Activated CD4-positive, alpha-beta memory T cell treated with anti-CD3 and anti-CD28 coated beads, Interleukin-2, amount 10 ng/mL, durations not matched to agents 7 days and 5 days (primary cell): ENCODE measurements at regions of chr22 and their contacts with region 1.

Region 1: DNA sequence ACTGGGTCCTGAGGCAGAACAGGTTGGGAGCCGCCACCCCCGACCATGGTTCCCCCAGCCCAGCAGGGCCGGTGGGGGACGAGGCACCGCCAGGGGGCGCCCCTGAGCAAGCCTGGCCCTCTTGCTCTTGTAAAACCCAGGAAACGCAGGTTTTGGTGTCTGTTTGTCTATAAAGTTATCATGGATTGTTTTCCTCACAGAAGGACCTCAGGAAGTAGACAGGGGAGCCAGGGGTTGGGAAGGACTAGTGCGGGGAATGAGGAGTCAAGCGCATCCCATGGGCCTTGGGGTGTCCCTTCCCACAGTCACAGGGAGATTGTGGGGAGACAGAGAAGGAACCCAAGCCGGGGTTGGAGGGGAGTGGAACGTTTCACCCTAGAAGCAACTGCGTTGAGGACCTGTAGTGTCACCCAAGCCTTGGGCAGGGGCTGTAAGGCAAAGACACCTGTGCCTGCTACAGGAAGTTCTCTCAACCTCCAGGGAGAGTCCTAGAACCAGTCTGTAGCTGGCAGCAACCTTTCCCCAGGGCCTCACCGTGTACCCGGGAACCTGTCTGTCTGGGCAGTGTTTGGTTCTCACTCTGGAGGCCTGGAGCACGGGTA is 26.4 kb downstream of the KCTD17 start:
- DNase-seq: peak; percentile 88
- H3K4me3 Mint-ChIP-seq: peak overlapping the region; percentile 1
- H3K27ac Mint-ChIP-seq: peak overlapping the region; percentile 100
- H3K4me1 Mint-ChIP-seq: peaks cover 69% of the 10 kb centered on the region
- H3K27me3 Mint-ChIP-seq: no peaks in the 10 kb centered on the region

Region 2: GRCh38 chr22:37030560-37031281 is 47.3 kb before region 1 on chr22:
- CTCF ChIA-PET with region 1: no interaction called
- POLR2A ChIA-PET with region 1: no interaction called
- DNase-seq: no peak
- H3K4me3 Mint-ChIP-seq: no peak overlapping the region
- H3K27ac Mint-ChIP-seq: no peak overlapping the region
- H3K4me1 Mint-ChIP-seq: no peaks in the 10 kb centered on the region
- H3K27me3 Mint-ChIP-seq: peaks cover 14% of the 10 kb centered on the region

Region 3: DNA sequence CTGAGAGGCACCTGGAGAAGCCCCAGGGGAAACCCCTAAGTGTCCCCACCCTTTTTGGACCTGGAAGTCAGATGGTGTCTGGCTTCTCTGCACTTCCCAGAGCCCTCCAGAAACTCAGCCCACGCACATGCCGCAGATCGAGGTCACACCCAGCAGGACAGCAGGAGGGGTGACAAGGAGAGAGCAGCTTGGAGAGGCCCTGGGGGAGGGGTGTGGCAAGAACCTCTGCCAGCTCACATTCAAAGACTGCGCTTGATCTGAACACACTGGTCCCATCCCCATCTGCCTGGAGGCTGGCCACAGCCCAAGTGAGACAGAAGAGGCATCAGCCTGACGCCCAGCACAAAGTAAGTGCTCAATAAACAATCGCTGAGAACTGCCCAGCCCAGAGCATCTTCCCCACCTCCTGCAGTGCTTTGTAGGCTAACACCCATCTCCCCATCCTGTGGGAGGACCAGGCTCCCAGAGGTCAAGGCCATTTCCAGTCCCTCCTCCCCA is 10.2 kb after region 1 on chr22:
- CTCF ChIA-PET with region 1: interaction called, 3 read pairs
- POLR2A ChIA-PET with region 1: interaction called, 11 read pairs
- DNase-seq: peak; percentile 38
- H3K4me3 Mint-ChIP-seq: peak overlapping the region; percentile 54
- H3K27ac Mint-ChIP-seq: peak overlapping the region; percentile 40
- H3K4me1 Mint-ChIP-seq: peaks cover 50% of the 10 kb centered on the region
- H3K27me3 Mint-ChIP-seq: no peaks in the 10 kb centered on the region

Region 4: GRCh38 chr22:37121887-37122591 is 44.1 kb after region 1 on chr22:
- CTCF ChIA-PET with region 1: interaction called, 81 read pairs
- POLR2A ChIA-PET with region 1: interaction called, 194 read pairs
- DNase-seq: peak; percentile 96
- H3K4me3 Mint-ChIP-seq: peak overlapping the region; percentile 74
- H3K27ac Mint-ChIP-seq: peak overlapping the region; percentile 99
- H3K4me1 Mint-ChIP-seq: peaks cover 88% of the 10 kb centered on the region
- H3K27me3 Mint-ChIP-seq: no peaks in the 10 kb centered on the region

Region 5: DNA sequence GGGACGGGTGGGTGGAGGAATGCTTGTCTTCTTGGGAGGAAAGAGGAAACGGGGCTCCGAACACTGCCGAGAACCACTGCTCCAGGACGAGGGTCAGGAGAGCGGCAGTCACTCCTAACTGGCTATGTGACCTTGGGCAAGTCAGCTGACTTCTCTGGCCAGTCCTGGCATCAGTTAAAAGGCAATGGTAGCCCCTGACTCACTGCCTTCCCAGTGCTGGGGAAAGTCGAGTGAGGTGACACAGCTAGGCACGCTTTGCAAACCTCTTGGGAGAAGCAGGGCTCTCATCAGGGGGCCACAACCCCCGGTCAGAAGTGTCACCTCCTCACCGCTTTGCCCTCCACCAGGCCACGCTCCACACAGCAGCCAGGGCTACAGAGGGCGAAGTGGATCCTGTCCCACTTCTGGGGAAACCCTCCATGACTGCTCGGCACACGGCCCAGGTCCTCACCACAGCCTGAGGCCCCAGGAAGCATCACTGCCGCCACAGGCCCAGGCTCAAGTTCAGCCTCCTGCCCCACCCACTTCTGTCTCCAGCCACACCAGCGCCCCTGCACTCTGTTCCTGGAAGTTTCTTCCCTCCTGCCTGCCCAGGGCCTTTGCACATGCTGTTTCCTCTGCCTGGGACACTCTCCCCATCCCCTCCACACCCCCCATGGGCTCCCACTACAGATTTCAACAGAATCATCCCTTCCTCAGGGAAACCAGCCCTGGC is 55.5 kb after region 1 on chr22:
- CTCF ChIA-PET with region 1: interaction called, 9 read pairs
- POLR2A ChIA-PET with region 1: interaction called, 194 read pairs
- DNase-seq: no peak
- H3K4me3 Mint-ChIP-seq: no peak overlapping the region
- H3K27ac Mint-ChIP-seq: peak overlapping the region; percentile 49
- H3K4me1 Mint-ChIP-seq: peaks cover 47% of the 10 kb centered on the region
- H3K27me3 Mint-ChIP-seq: no peaks in the 10 kb centered on the region

Region 6: GRCh38 chr22:37166675-37167066 is 88.7 kb after region 1 on chr22:
- CTCF ChIA-PET with region 1: interaction called, 30 read pairs
- POLR2A ChIA-PET with region 1: interaction called, 91 read pairs
- DNase-seq: peak; percentile 87
- H3K4me3 Mint-ChIP-seq: peak overlapping the region; percentile 71
- H3K27ac Mint-ChIP-seq: peak overlapping the region; percentile 94
- H3K4me1 Mint-ChIP-seq: peaks cover 85% of the 10 kb centered on the region
- H3K27me3 Mint-ChIP-seq: no peaks in the 10 kb centered on the region

Region 7: GRCh38 chr22:37229805-37230672 is 152.1 kb after region 1 on chr22:
- CTCF ChIA-PET with region 1: no interaction called
- POLR2A ChIA-PET with region 1: interaction called, 21 read pairs
- DNase-seq: peak; percentile 94
- H3K4me3 Mint-ChIP-seq: peak overlapping the region; percentile 45
- H3K27ac Mint-ChIP-seq: peak overlapping the region; percentile 97
- H3K4me1 Mint-ChIP-seq: peaks cover 90% of the 10 kb centered on the region
- H3K27me3 Mint-ChIP-seq: no peaks in the 10 kb centered on the region